Naive thymus-derived CD4-positive, alpha-beta T cell (primary cell): ENCODE measurements at regions of chr1 and their contacts with region 1.

Region 1: DNA sequence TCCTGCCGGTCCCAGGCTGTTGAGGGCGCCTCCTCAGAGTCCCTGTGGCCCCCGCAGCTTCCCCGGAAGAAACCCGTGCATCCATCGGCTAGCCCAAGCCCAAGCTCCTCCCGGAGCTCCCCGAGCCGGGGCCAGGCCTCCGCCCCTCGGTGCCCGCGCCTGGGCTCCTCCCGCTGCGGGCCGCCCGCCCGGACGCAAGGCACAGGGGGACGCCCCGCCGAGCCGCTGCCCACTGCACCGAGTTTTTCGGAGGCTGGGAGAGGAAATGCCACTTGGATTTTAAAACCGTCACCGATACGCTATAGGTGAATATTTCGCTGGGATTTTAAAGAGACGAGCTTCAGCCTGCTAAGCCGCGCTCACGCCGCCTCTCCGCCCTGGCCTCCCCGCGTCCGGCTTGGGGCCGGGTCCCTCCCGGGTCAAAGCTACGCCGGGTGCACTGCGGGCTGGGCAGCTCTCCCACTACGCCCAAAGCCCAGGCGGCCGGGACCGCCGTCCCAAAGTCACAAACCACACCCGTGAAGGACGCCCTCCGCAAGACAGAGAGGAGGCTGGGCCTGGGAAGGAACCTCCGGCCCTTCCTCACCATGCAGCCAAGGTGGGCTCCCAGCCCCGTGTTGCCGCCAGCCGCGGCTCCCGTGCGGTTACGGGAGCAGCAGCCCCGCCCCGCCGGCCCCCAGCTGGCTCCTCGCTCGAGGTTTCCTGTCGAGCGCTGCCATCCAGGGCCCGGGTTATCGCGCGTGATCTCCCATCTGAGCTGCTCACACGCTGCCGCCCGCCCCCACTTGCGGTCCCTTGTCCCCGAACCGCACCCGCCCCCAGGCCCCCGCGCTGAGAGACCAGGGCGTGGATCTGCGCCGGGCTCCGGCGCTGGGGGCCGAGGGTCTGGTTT is 63.2 kb downstream of the CD247 start:
- DNase-seq: peak; percentile 64 to 87 (median 83)
- ATAC-seq: peak; percentile 74
- H3K4me3 ChIP-seq: peak overlapping the region; percentile 91
- H3K4me3 Mint-ChIP-seq: peak overlapping the region; percentile 80 to 91 (median 87)
- H3K27ac ChIP-seq: peak overlapping the region; percentile 100
- H3K27ac Mint-ChIP-seq: peak overlapping the region; percentile 41 to 98 (median 93)
- H3K4me1 ChIP-seq: peaks cover 34 to 70% of the 10 kb centered on the region in 2 donors
- H3K4me1 Mint-ChIP-seq: peaks cover 37 to 86% (median 72%) of the 10 kb centered on the region in 7 donors
- H3K27me3 ChIP-seq: no peaks in the 10 kb centered on the region
- H3K27me3 Mint-ChIP-seq: no peaks in the 10 kb centered on the region

Region 2: GRCh38 chr1:167467126-167467710 is 12.1 kb after region 1 on chr1:
- CTCF ChIA-PET with region 1: interaction called, 16 read pairs
- POLR2A ChIA-PET with region 1: interaction called, 156 read pairs
- intact Hi-C with region 1: loop called (anchors 1 to 2 kb)
- DNase-seq: no peak
- ATAC-seq: peak; percentile 57
- H3K4me3 ChIP-seq: no peak overlapping the region
- H3K4me3 Mint-ChIP-seq: peak overlapping the region in 8 of 10 donors; percentile 29 to 82 (median 59)
- H3K27ac ChIP-seq: peak overlapping the region; percentile 69
- H3K27ac Mint-ChIP-seq: peak overlapping the region in 8 of 9 donors; percentile 86 to 98 (median 92)
- H3K4me1 ChIP-seq: peaks cover under 1 to 79% of the 10 kb centered on the region in 2 donors
- H3K4me1 Mint-ChIP-seq: peaks cover 39 to 99% (median 92%) of the 10 kb centered on the region in 7 donors
- H3K27me3 ChIP-seq: no peaks in the 10 kb centered on the region
- H3K27me3 Mint-ChIP-seq: no peaks in the 10 kb centered on the region

Region 3: DNA sequence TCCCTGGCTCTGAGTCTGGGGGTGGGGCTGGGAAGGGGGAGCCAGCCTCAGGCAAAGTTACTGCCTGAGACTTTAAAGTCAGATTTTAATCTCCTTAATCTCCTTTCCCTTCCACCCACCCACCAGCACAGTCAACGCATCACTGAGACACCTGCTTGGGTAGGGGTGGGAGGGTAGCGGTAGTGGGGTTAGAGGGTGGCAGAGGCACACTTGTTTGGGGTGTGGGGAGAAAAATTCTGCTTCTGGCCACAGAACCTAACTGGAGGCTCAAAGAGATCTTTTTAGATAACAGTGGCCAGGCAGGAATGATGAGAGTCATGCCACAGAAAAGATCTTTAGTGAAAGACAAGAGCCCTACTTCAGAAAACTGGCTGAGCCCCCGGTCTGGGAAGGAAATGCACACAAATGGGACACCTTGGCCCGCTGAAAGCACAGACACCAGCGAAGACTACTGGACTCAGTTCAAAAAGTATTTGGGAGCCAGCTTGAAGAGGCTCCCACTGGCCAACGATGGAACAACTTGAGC is 19.1 kb after region 1 on chr1:
- CTCF ChIA-PET with region 1: interaction called, 16 read pairs
- POLR2A ChIA-PET with region 1: interaction called, 184 read pairs
- intact Hi-C with region 1: loop called (anchors 2 kb)
- DNase-seq: peak in 8 of 9 donors; percentile 41 to 87 (median 58)
- ATAC-seq: peak; percentile 89
- H3K4me3 ChIP-seq: peak overlapping the region; percentile 49
- H3K4me3 Mint-ChIP-seq: peak overlapping the region; percentile 52 to 98 (median 86)
- H3K27ac ChIP-seq: peak overlapping the region; percentile 75
- H3K27ac Mint-ChIP-seq: peak overlapping the region; percentile 47 to 98 (median 95)
- H3K4me1 ChIP-seq: peaks cover 36 to 81% of the 10 kb centered on the region in 2 donors
- H3K4me1 Mint-ChIP-seq: peaks cover 57 to 100% (median 94%) of the 10 kb centered on the region in 7 donors
- H3K27me3 ChIP-seq: no peaks in the 10 kb centered on the region
- H3K27me3 Mint-ChIP-seq: no peaks in the 10 kb centered on the region

Region 4: DNA sequence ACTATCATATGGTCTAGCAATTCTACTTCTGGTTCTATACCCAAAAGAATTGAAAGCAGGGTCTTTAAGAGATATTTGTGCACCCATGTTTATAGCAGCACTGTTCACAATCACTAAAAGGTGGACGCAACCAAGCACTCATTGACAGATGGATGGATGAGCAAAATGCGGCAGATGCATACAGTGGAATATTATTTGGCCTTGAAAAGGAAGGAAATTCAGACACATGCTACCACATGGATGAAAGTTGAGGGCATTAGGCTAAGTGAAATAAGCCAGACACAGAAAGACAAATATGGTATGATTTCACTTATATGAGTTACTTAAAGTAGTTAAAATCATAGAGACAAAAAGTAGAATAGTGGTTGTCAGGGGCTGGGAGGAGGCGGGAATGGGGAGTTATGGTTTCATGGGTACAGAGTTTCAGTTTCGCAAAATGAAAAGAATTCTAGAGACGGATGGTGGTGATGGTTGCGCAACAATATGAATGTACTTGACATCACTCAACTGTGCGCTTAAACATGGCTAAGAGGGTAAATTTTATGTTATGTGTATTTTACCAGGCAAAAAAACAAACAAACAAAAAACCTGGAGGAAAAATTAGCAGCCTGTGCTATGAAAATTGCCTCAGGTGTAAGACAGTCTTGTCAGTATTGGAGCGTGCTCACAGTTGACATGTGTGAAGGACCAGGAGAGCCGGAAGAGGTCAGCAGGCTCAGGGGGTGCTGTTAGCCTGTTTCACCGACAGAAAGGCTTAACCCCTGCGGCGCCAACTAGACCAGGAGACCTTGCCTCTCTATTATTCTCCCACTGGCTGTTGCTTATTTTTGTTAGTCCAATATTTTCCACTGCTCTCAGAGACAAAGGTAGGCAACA is 36.7 kb after region 1 on chr1:
- CTCF ChIA-PET with region 1: no interaction called
- POLR2A ChIA-PET with region 1: interaction called, 184 read pairs
- intact Hi-C with region 1: loop called (anchors 1 to 2 kb)
- DNase-seq: peak in 6 of 9 donors; percentile 46 to 69 (median 54)
- ATAC-seq: peak; percentile 42
- H3K4me3 ChIP-seq: peak overlapping the region; percentile 35
- H3K4me3 Mint-ChIP-seq: peak overlapping the region; percentile 75 to 88 (median 82)
- H3K27ac ChIP-seq: peak overlapping the region; percentile 96
- H3K27ac Mint-ChIP-seq: peak overlapping the region; percentile 84 to 100 (median 95)
- H3K4me1 ChIP-seq: peaks cover 49 to 94% of the 10 kb centered on the region in 2 donors
- H3K4me1 Mint-ChIP-seq: peaks cover 71 to 100% (median 95%) of the 10 kb centered on the region in 7 donors
- H3K27me3 ChIP-seq: no peaks in the 10 kb centered on the region
- H3K27me3 Mint-ChIP-seq: no peaks in the 10 kb centered on the region

Region 5: DNA sequence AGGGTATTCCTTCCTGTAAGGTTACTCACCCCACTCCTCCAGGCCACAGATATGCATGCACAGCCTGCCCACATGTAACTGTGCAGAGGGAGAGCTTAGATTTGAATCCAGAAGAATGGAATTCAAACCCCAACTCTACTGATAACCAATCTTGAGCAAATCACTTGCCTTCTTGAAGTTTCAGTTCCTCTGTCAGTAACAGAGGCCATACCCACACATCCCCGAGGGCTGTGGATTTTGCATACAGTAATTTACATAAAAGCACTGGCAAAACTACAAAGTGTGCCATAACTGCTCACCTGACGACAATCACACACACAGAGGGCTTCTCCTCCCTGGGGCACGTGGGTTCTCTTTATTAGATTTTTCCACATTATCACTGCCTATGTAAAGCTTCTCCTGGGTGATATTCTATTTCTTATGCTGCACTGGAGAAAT is 44.5 kb after region 1 on chr1:
- CTCF ChIA-PET with region 1: interaction called, 4 read pairs
- POLR2A ChIA-PET with region 1: interaction called, 26 read pairs
- intact Hi-C with region 1: no loop called
- DNase-seq: peak in 6 of 9 donors; percentile 51 to 74 (median 55)
- ATAC-seq: peak; percentile 76
- H3K4me3 ChIP-seq: peak overlapping the region; percentile 8
- H3K4me3 Mint-ChIP-seq: peak overlapping the region; percentile 49 to 88 (median 68)
- H3K27ac ChIP-seq: peak overlapping the region; percentile 96
- H3K27ac Mint-ChIP-seq: peak overlapping the region; percentile 77 to 100 (median 94)
- H3K4me1 ChIP-seq: peaks cover 55 to 99% of the 10 kb centered on the region in 2 donors
- H3K4me1 Mint-ChIP-seq: peaks cover 76 to 100% (median 98%) of the 10 kb centered on the region in 7 donors
- H3K27me3 ChIP-seq: no peaks in the 10 kb centered on the region
- H3K27me3 Mint-ChIP-seq: no peaks in the 10 kb centered on the region

Region 6: DNA sequence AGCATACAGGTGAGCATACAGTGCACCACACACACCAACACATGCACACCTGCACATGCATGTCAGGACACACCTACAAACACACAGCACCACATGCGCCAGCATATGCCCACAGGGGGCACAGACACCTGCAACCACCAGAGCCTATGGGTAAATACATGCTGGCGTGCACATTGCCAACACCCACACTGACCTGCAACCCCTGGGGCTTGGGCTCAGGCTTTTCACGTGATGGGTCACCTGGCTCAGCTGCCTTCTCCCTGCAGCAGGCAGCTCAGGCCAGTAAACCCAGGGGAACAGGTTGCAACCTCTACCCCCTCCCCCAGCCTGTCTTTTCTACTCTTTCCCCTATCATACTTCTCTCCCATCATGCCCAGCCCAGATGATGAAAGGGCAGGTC is 55.1 kb after region 1 on chr1:
- CTCF ChIA-PET with region 1: interaction called, 15 read pairs
- POLR2A ChIA-PET with region 1: interaction called, 273 read pairs
- intact Hi-C with region 1: no loop called
- DNase-seq: peak in 1 of 9 donors; percentile 38
- ATAC-seq: peak; percentile 37
- H3K4me3 ChIP-seq: peak overlapping the region; percentile 29
- H3K4me3 Mint-ChIP-seq: peak overlapping the region; percentile 58 to 100 (median 90)
- H3K27ac ChIP-seq: peak overlapping the region; percentile 96
- H3K27ac Mint-ChIP-seq: peak overlapping the region; percentile 80 to 100 (median 94)
- H3K4me1 ChIP-seq: peaks cover 48 to 73% of the 10 kb centered on the region in 2 donors
- H3K4me1 Mint-ChIP-seq: peaks cover 57 to 98% (median 85%) of the 10 kb centered on the region in 7 donors
- H3K27me3 ChIP-seq: no peaks in the 10 kb centered on the region
- H3K27me3 Mint-ChIP-seq: no peaks in the 10 kb centered on the region

Region 7: DNA sequence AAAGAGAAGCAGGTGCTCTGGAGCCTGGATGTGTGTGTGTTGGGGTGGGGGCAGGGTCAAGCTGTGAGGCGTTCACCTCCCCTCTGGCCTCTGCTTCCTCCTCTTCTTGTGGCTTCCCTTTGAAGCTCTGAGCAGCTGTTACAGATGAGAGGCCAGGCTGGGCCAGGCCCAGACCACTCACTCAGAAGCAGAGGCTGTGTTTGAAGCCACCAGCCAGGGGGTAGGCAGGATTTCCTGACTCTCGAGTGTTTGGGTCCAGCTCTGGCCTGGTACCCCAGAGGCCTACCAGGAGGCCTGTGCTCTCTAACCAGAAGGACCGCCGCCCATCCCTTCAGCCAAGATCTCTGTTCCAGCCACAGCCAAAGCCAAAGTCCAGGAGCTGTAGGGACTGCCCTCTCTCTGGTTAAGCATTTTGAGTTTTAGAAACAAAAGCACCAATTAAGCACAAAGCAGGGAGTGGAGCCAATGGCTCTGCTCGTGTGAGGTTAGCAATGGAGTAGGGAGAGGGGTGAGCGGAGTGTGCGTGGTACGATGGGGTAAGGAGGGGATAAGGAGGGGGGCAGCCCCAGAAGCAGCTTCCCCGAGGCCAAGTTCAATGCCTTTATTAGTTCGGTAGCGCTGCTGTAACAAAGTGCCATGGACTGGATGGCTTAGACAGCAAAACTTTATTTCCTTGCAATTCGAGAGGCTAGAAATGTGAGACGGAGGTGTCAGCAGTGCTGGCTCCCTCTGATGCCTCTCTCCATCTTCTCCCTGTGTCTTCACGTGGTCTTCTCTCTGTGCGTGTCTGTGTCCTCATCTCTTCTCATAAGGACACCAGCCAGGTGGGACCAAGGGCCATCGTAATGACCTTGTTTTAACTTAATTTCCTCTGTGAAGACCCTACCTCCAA is 195.4 kb after region 1 on chr1:
- CTCF ChIA-PET with region 1: no interaction called
- POLR2A ChIA-PET with region 1: no interaction called
- intact Hi-C with region 1: no loop called
- DNase-seq: no peak
- ATAC-seq: peak; percentile 67
- H3K4me3 ChIP-seq: no peak overlapping the region
- H3K4me3 Mint-ChIP-seq: peak overlapping the region; percentile 12 to 86 (median 66)
- H3K27ac ChIP-seq: peak overlapping the region; percentile 59
- H3K27ac Mint-ChIP-seq: peak overlapping the region; percentile 75 to 94 (median 90)
- H3K4me1 ChIP-seq: peaks cover 75 to 77% of the 10 kb centered on the region in 2 donors
- H3K4me1 Mint-ChIP-seq: peaks cover 70 to 96% (median 87%) of the 10 kb centered on the region in 7 donors
- H3K27me3 ChIP-seq: no peaks in the 10 kb centered on the region
- H3K27me3 Mint-ChIP-seq: no peaks in the 10 kb centered on the region